Brain microvascular endothelial cell (primary cell): ENCODE measurements at regions of chr3 and their contacts with region 1.

Region 1: DNA sequence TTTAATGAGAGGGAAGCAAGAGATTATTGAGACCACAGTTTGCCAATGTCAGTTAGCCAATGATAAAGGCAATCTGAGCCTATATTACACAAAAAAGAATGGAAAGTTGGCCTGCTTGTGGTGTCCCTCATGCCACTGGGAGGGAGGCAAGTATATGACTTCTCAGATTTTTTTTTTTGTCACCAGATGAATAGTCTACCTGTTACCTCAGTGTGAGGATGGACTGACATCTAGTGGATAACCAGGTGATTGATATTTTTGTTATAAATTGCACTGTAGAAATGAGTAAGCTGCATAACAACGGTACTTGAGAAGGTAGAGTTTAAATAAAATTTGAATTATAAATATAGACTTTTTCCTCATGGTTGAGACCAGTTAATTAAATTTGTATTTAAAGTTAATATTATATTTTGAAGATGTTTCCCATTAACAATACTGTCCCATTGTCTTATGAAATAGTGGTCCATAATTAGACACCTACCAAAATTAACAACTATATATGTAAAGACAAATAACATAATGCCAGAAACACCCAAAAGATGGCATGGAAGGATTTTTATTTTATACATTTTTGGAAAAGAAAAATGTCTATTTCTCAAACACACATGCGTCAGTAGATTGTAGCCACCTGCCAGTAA is 237.8 kb upstream of the GADL1 start:
- DNase-seq: peak; percentile 11
- H3K4me3 ChIP-seq: no peak overlapping the region
- H3K27ac ChIP-seq: no peak overlapping the region
- H3K27me3 ChIP-seq: no peaks in the 10 kb centered on the region
- CTCF ChIP-seq: peak; percentile 49

Region 2: GRCh38 chr3:30768703-30769685 is 363.3 kb before region 1 on chr3:
- in situ Hi-C with region 1: loop called (anchors 25 kb)
- DNase-seq: peak; percentile 75
- H3K4me3 ChIP-seq: no peak overlapping the region
- H3K27ac ChIP-seq: no peak overlapping the region
- H3K27me3 ChIP-seq: no peaks in the 10 kb centered on the region
- CTCF ChIP-seq: peak; percentile 93

Region 3: DNA sequence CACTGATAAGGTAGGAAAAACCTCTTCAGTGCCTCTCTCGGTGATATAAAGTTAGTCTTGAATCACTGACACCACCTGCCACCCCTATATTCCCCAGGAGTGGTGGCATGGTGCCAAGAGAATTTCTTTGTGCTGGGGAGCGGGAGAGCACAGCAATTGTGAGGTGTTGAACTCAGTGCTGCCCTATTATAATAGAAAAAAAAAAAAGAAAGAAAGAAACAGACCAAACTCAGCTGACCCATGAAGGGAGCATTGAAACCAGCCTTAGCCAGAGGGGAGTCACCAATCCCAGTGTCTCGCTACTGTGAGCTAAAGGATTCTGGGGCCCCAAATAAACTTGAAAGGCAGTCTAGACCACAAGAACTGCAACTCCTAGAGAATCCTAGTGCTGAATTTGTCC is 199.1 kb after region 1 on chr3:
- in situ Hi-C with region 1: no loop called
- DNase-seq: no peak
- H3K4me3 ChIP-seq: no peak overlapping the region
- H3K27ac ChIP-seq: no peak overlapping the region
- H3K27me3 ChIP-seq: no peaks in the 10 kb centered on the region
- CTCF ChIP-seq: no peak

Region 4: DNA sequence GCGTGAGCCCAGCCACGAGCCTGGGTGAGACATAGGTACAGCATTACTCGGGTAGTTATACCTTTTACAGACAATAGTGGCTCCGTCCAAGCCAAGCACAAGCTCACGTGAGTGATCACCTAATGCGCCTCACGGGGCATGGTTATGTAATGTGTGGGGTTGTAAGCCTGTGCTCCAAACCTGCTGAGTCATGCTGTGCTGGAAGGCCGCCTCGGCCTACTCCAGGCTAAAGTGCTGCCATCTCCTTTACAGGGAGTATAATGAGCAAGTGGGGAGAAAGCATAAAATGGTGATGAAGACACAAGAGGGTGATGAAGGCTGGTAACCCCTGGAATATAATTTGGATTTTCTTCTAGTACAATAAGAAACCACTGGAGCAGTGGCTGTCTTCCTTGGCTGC is 224.7 kb after region 1 on chr3:
- in situ Hi-C with region 1: no loop called
- DNase-seq: no peak
- H3K4me3 ChIP-seq: no peak overlapping the region
- H3K27ac ChIP-seq: no peak overlapping the region
- H3K27me3 ChIP-seq: no peaks in the 10 kb centered on the region
- CTCF ChIP-seq: no peak